Calu3 (cell line): ENCODE measurements at regions of chr16 and their contacts with region 1.

Region 1: GRCh38 chr16:87131061-87131995 is 185.9 kb downstream of the C16orf95 start:
- DNase-seq: no peak
- H3K4me3 Mint-ChIP-seq: no peak overlapping the region
- H3K27ac Mint-ChIP-seq: no peak overlapping the region
- H3K4me1 Mint-ChIP-seq: no peaks in the 10 kb centered on the region
- H3K27me3 Mint-ChIP-seq: peaks cover 34% of the 10 kb centered on the region
- CTCF ChIP-seq: no peak

Region 2: DNA sequence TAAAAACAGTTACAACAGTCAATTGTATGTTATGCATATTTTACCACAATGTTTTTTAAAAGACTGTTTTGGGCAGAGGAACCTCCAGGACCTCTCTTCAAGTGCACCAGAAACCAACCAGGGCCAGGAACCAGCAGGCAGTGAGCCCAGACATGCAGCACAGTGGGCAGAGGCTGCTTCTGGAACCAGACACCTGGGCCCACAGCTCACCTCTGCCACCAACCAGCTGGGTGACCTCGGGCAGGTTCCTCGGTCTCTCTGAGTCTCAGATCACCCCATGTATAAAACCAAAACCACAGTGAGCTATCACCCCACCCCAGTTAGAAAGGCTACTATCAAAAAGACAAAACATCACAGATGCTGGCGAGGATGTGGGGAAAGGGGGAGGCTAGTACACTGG is 24.9 kb after region 1 on chr16:
- CTCF ChIA-PET with region 1: interaction called, 10 read pairs
- intact Hi-C with region 1: no loop called
- DNase-seq: no peak
- H3K4me3 Mint-ChIP-seq: no peak overlapping the region
- H3K27ac Mint-ChIP-seq: no peak overlapping the region
- H3K4me1 Mint-ChIP-seq: no peaks in the 10 kb centered on the region
- H3K27me3 Mint-ChIP-seq: peaks cover 76% of the 10 kb centered on the region
- CTCF ChIP-seq: no peak